CD4-positive, alpha-beta T cell (primary cell): ENCODE measurements at regions of chr7 and their contacts with region 1.

Region 1: GRCh38 chr7:150631866-150632864 is at the start of gene GIMAP6:
- DNase-seq: peak; percentile 21 to 76 (median 49)
- ATAC-seq: peak; percentile 68
- H3K4me3 ChIP-seq: peak within 1 kb of the TSS; percentile 79
- H3K4me3 Mint-ChIP-seq: peak within 1 kb of the TSS; percentile 96
- H3K27ac ChIP-seq: peak within 1 kb of the TSS; percentile 58 to 81
- H3K27ac Mint-ChIP-seq: peak within 1 kb of the TSS; percentile 84
- H3K4me1 ChIP-seq: peaks cover 60% of the 10 kb centered on the region
- H3K4me1 Mint-ChIP-seq: peaks cover 87% of the 10 kb centered on the region
- H3K27me3 ChIP-seq: no peaks in the 10 kb centered on the region
- H3K27me3 Mint-ChIP-seq: no peaks in the 10 kb centered on the region
- CTCF ChIP-seq: no peak
- total RNA-seq, gene GIMAP6: 14.3 to 14.9 TPM

Region 2: GRCh38 chr7:150514748-150515222 is 117.4 kb before region 1 on chr7 and contains the start of gene GIMAP7:
- CTCF ChIA-PET with region 1: no interaction called
- POLR2A ChIA-PET with region 1: interaction called, 34 read pairs
- intact Hi-C with region 1: loop called in 1 of 2 experiments (anchors 5 kb)
- DNase-seq: peak; percentile 59 to 85 (median 70)
- ATAC-seq: peak; percentile 82
- H3K4me3 ChIP-seq: peak within 1 kb of the TSS; percentile 79
- H3K4me3 Mint-ChIP-seq: peak within 1 kb of the TSS; percentile 100
- H3K27ac ChIP-seq: peak within 1 kb of the TSS; percentile 63 to 84
- H3K27ac Mint-ChIP-seq: peak within 1 kb of the TSS; percentile 93
- H3K4me1 ChIP-seq: peaks cover 42% of the 10 kb centered on the region
- H3K4me1 Mint-ChIP-seq: peaks cover 51% of the 10 kb centered on the region
- H3K27me3 ChIP-seq: no peaks in the 10 kb centered on the region
- H3K27me3 Mint-ChIP-seq: no peaks in the 10 kb centered on the region
- CTCF ChIP-seq: no peak
- total RNA-seq, gene GIMAP7: 48.4 to 50.7 TPM

Region 3: GRCh38 chr7:150580638-150581394 is 51.3 kb before region 1 on chr7:
- CTCF ChIA-PET with region 1: no interaction called
- POLR2A ChIA-PET with region 1: interaction called, 12 read pairs
- intact Hi-C with region 1: loop called in 1 of 2 experiments (anchors 5 kb)
- DNase-seq: no peak
- ATAC-seq: no peak
- H3K4me3 ChIP-seq: no peak overlapping the region
- H3K4me3 Mint-ChIP-seq: no peak overlapping the region
- H3K27ac ChIP-seq: no peak overlapping the region
- H3K27ac Mint-ChIP-seq: peak overlapping the region; percentile 47
- H3K4me1 ChIP-seq: peaks cover 12% of the 10 kb centered on the region
- H3K4me1 Mint-ChIP-seq: peaks cover 41% of the 10 kb centered on the region
- H3K27me3 ChIP-seq: no peaks in the 10 kb centered on the region
- H3K27me3 Mint-ChIP-seq: no peaks in the 10 kb centered on the region
- CTCF ChIP-seq: no peak

Region 4: GRCh38 chr7:150668472-150668911 is 36.3 kb after region 1 on chr7:
- CTCF ChIA-PET with region 1: no interaction called
- POLR2A ChIA-PET with region 1: interaction called, 55 read pairs
- intact Hi-C with region 1: loop called (anchors 1 to 2 kb)
- DNase-seq: peak in 13 of 14 experiments; percentile 34 to 92 (median 51)
- ATAC-seq: peak; percentile 82
- H3K4me3 ChIP-seq: peak overlapping the region; percentile 4
- H3K4me3 Mint-ChIP-seq: peak overlapping the region; percentile 49
- H3K27ac ChIP-seq: peak overlapping the region; percentile 73 to 85
- H3K27ac Mint-ChIP-seq: peak overlapping the region; percentile 91
- H3K4me1 ChIP-seq: peaks cover 70% of the 10 kb centered on the region
- H3K4me1 Mint-ChIP-seq: peaks cover 94% of the 10 kb centered on the region
- H3K27me3 ChIP-seq: no peaks in the 10 kb centered on the region
- H3K27me3 Mint-ChIP-seq: no peaks in the 10 kb centered on the region
- CTCF ChIP-seq: no peak

Region 5: DNA sequence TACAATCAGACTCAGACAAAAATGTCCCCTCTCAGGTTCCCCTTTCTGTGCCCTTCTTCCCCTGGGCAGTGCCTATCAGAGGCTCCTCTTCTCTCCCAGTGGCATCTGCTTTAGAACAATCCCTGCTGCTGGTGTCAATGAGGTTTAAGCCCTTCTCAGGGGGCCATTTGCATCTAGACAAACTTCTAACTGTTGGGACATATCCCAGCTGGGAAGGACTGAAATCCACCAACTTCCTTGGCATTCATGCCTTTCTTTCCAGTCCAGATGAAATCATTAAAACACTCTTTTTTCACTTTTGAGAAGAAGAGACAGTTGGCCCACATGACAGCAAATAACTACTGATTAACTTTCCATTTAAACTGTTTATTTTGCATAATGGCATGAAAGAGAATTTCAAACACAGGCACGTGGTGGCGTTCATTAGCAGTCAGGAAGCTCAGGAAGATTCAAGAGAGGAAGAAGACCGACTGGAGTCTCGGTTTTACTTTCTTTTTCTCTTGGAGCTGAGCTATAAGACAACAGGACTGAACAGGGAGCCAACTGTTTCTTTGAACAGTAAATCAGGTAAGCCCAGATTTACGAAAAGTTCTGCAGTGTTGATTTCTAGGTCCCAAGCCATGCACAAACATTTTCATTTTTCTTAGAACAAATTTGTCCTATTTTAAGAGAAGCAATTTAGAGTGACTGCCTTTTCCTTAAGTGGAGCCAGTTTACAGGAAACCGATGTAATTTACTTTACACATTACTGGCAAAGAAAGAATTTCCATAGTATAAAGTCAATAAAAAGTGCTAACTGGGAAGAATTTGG is 53.3 kb after region 1 on chr7 and contains the start of gene GIMAP2:
- CTCF ChIA-PET with region 1: interaction called, 6 read pairs
- POLR2A ChIA-PET with region 1: interaction called, 39 read pairs
- intact Hi-C with region 1: loop called in 1 of 2 experiments (anchors 2 kb)
- DNase-seq: peak in 9 of 14 experiments; percentile 22 to 81 (median 48)
- ATAC-seq: peak; percentile 86
- H3K4me3 ChIP-seq: peak within 1 kb of the TSS; percentile 80
- H3K4me3 Mint-ChIP-seq: peak within 1 kb of the TSS; percentile 100
- H3K27ac ChIP-seq: peak within 1 kb of the TSS; percentile 78 to 95
- H3K27ac Mint-ChIP-seq: peak within 1 kb of the TSS; percentile 100
- H3K4me1 ChIP-seq: peaks cover 44% of the 10 kb centered on the region
- H3K4me1 Mint-ChIP-seq: peaks cover 85% of the 10 kb centered on the region
- H3K27me3 ChIP-seq: no peaks in the 10 kb centered on the region
- H3K27me3 Mint-ChIP-seq: no peaks in the 10 kb centered on the region
- CTCF ChIP-seq: no peak
- total RNA-seq, gene GIMAP2: 64.1 to 65.1 TPM

Region 6: DNA sequence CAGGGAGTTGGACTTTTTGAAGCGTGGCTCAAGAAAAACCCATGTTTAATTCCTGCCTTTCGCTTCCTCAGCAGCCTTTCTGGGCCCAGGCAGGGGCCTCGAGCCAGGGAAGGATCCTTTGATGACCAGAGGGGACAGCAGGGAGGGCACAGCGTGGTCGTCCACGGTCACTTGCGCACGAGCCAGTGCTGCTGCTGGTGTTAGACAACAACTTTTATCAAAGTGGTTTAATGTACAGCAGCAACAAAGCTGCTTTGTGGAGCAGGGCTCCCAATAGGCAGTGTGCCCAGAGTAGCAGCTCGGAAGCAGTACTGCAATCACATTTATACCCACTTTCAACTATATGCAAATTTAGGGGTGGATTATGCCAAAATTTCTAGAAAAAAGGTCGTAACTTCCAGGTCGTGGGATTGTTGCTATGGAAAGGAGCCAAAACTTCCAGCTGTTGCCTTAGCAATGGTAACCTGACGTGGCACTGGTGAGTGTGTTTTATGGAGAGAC is 90.3 kb after region 1 on chr7:
- CTCF ChIA-PET with region 1: interaction called, 4 read pairs
- POLR2A ChIA-PET with region 1: interaction called, 25 read pairs
- intact Hi-C with region 1: no loop called
- DNase-seq: no peak
- ATAC-seq: no peak
- H3K4me3 ChIP-seq: peak overlapping the region; percentile 13
- H3K4me3 Mint-ChIP-seq: peak overlapping the region; percentile 54
- H3K27ac ChIP-seq: peak overlapping the region; percentile 5 to 6
- H3K27ac Mint-ChIP-seq: peak overlapping the region; percentile 81
- H3K4me1 ChIP-seq: peaks cover 42% of the 10 kb centered on the region
- H3K4me1 Mint-ChIP-seq: peaks cover 78% of the 10 kb centered on the region
- H3K27me3 ChIP-seq: no peaks in the 10 kb centered on the region
- H3K27me3 Mint-ChIP-seq: no peaks in the 10 kb centered on the region
- CTCF ChIP-seq: no peak

Region 7: GRCh38 chr7:151008511-151009323 is 376.6 kb after region 1 on chr7:
- CTCF ChIA-PET with region 1: no interaction called
- POLR2A ChIA-PET with region 1: no interaction called
- intact Hi-C with region 1: no loop called
- DNase-seq: peak; percentile 53 to 88 (median 74)
- ATAC-seq: peak; percentile 18
- H3K4me3 ChIP-seq: peak overlapping the region; percentile 52
- H3K4me3 Mint-ChIP-seq: peak overlapping the region; percentile 87
- H3K27ac ChIP-seq: peak overlapping the region; percentile 74 to 79
- H3K27ac Mint-ChIP-seq: peak overlapping the region; percentile 88
- H3K4me1 ChIP-seq: peaks cover 75% of the 10 kb centered on the region
- H3K4me1 Mint-ChIP-seq: peaks cover 71% of the 10 kb centered on the region
- H3K27me3 ChIP-seq: no peaks in the 10 kb centered on the region
- H3K27me3 Mint-ChIP-seq: no peaks in the 10 kb centered on the region
- CTCF ChIP-seq: peak; percentile 67